Upper lobe of right lung (tissue), 1 donor: ENCODE measurements at regions of chr10 and their contacts with region 1.

Region 1: DNA sequence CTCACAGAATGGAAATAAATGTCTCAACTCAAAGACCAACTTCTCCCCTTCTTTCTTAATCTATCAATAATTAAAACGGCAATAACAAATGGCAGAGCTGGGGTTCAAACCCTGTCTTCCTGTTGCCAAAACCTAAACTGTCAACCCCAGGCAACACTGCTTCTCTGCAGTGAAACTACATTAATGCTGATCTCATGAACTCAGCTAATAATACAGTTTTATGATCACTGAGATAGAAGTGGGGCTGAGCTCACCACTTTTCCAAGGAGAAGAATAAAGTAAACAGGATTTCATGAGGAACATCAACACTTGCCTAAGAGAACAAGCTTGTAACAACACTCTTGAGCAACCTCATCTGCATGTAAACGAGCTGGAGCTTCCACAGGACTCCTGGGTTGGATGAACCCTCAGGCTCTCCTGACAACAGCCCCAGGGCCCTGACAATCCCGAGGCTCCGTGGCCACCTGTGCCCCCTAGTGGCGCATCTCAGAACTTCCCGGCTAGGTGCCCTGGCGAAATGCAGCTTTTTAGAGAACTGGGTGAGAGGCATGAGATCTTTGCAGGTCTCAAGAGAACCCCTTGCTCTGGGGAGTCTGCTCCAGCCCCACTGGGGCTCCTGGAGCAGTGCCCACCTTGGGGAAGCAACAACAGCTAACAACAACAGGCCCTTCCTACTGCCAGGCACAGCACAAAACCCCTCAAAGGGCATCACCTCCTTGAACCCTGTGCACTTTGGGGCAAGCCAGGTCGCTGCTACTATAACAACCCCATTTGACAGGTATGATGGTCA is 169.3 kb downstream of the SH3PXD2A start:
- DNase-seq: peak; percentile 86
- ATAC-seq: peak; percentile 92
- H3K4me3 ChIP-seq: no peak overlapping the region
- H3K27ac ChIP-seq: no peak overlapping the region
- H3K4me1 ChIP-seq: no peaks in the 10 kb centered on the region
- H3K27me3 ChIP-seq: no peaks in the 10 kb centered on the region
- CTCF ChIP-seq: peak; percentile 97

Region 2: GRCh38 chr10:103602028-103602851 is 83.8 kb before region 1 on chr10:
- intact Hi-C with region 1: loop called (anchors 5 kb)
- DNase-seq: no peak
- ATAC-seq: no peak
- H3K4me3 ChIP-seq: no peak overlapping the region
- H3K27ac ChIP-seq: no peak overlapping the region
- H3K4me1 ChIP-seq: no peaks in the 10 kb centered on the region
- H3K27me3 ChIP-seq: no peaks in the 10 kb centered on the region
- CTCF ChIP-seq: no peak